ENCODE measurements at regions of chr21 and their contacts with region 1.

Region 1: GRCh38 chr21:45973659-45974072 is 7.9 kb upstream of the COL6A1 start:
- DNase-seq: peak; percentile 26 to 68
- ATAC-seq: peak in 1 of 2 experiments; percentile 64; a peak in 3 of 6 replicates
- H3K4me3 ChIP-seq: peak overlapping the region; percentile 34; the same call in 2 of the 3 replicates
- H3K27ac ChIP-seq: peak overlapping the region; percentile 14 to 71; a peak in 3 of 6 replicates
- H3K4me1 ChIP-seq: peaks cover 6% of the 10 kb centered on the region; the same call in 1 of the 3 replicates
- CTCF ChIP-seq: no peak; the same call in 1 of the 3 replicates
- EP300 ChIP-seq: no peak
- POLR2A ChIP-seq: no peak
- RAD21 ChIP-seq: peak; percentile 30 to 32; a peak in 3 of 5 replicates

Region 2: GRCh38 chr21:46097336-46098293 is 123.9 kb after region 1 on chr21 and contains the start of gene COL6A2:
- CTCF ChIA-PET with region 1: interaction called, 19 read pairs
- POLR2A ChIA-PET with region 1: no interaction called
- DNase-seq: peak; percentile 10 to 53
- ATAC-seq: peak; percentile 85 to 96
- H3K4me3 ChIP-seq: peak within 1 kb of the TSS; percentile 67
- H3K27ac ChIP-seq: peak within 1 kb of the TSS; percentile 72 to 90
- H3K4me1 ChIP-seq: no peaks in the 10 kb centered on the region
- CTCF ChIP-seq: no peak
- EP300 ChIP-seq: no peak
- POLR2A ChIP-seq: no peak
- RAD21 ChIP-seq: peak; percentile 5 to 39; a peak in 1 of 5 replicates
- polyA plus RNA-seq, gene COL6A2: 2.3 and 2.5 TPM in 2 replicates

Region 3: GRCh38 chr21:46144464-46145070 is 170.9 kb after region 1 on chr21:
- CTCF ChIA-PET with region 1: interaction called, 20 read pairs
- POLR2A ChIA-PET with region 1: no interaction called
- DNase-seq: no peak
- ATAC-seq: no peak
- H3K4me3 ChIP-seq: no peak overlapping the region
- H3K27ac ChIP-seq: peak overlapping the region in 1 of 2 experiments; percentile 81; a peak in 4 of 6 replicates
- H3K4me1 ChIP-seq: no peaks in the 10 kb centered on the region
- CTCF ChIP-seq: no peak
- EP300 ChIP-seq: no peak
- POLR2A ChIP-seq: no peak
- RAD21 ChIP-seq: no peak

Region 4: GRCh38 chr21:46207006-46207981 is 233.6 kb after region 1 on chr21:
- CTCF ChIA-PET with region 1: no interaction called
- POLR2A ChIA-PET with region 1: no interaction called
- DNase-seq: no peak
- ATAC-seq: no peak
- H3K4me3 ChIP-seq: no peak overlapping the region
- H3K27ac ChIP-seq: no peak overlapping the region
- H3K4me1 ChIP-seq: no peaks in the 10 kb centered on the region
- CTCF ChIP-seq: no peak
- EP300 ChIP-seq: no peak
- POLR2A ChIP-seq: no peak
- RAD21 ChIP-seq: no peak

Region 5: DNA sequence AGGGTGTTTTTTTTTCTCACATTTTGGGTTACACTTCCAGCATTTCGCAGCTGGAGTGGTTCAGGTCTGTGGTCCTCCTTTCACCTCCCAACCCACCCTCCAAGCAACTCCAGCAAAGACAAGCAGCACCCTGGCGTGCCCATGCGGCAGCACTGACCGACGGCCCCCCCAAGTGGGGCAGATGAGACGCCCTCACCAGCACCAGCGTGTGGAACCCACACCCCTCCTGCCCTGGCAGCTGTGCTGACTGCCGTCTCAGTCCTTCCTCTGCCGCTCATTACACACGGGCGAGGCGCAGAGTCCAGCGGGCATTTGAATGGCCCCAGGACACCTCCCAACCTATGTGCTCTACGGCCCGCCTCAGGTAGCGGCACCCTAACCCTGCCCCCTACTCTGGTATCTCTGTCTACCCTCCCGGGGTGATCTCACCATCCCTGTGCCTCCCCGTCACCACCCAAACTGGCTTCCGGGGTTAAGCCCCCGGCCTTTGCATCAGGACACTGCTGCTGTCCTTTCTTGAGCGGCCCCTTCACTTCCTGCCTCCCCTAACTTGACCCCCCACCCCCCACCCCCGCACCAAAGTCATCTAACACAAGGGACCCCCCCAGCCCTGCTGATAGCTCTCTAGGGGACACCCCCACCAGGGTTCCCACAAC is 244.0 kb after region 1 on chr21:
- CTCF ChIA-PET with region 1: no interaction called
- POLR2A ChIA-PET with region 1: interaction called, 15 read pairs
- DNase-seq: no peak
- ATAC-seq: no peak
- H3K4me3 ChIP-seq: no peak overlapping the region
- H3K27ac ChIP-seq: no peak overlapping the region
- H3K4me1 ChIP-seq: no peaks in the 10 kb centered on the region
- CTCF ChIP-seq: no peak
- EP300 ChIP-seq: no peak
- POLR2A ChIP-seq: no peak
- RAD21 ChIP-seq: no peak

Measured in A549 (cell line).